GM12878 (cell line): ENCODE measurements at regions of chr20 and their contacts with region 1.

Region 1: DNA sequence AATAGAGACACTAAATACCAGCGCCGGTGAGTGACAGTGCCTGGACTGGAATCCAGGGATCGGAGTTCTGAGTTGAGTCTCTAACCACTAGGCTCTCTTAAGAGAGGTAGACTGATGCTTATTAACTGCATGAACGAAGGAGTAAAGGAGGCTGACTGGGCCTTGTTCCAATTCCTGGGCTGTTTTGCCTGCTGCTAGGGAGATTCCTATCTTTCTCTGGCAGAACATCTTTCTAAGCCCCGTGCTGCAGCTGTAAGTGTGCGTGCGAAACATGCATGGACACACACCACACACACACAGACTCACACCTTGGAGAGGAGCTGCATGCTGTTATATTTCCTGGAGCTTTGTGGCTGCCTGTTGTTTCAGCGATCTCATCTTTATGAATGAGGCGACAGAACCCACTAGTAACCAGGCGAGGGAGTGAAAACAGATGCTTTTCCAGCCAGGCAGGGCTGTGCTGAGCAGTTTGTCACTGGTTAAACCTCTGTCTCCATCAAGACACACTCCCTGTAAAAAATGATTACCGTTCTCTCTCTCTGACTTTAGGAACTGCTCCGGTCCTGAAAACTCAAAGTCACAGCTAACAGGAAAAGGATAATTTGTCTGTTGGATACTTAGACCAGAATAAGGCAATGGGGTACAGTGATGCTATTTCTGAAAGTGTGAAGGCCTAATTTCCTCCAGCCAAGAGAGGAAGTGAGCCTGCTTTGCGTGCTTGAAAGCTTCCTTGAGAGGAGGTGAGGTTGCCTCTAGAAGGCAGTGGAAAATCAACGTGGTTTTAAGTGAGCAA is 157.4 kb upstream of the ZNF217 start:
- DNase-seq: peak; percentile 69
- ATAC-seq: peak; percentile 83
- H3K4me3 ChIP-seq: peak overlapping the region; percentile 2; the same call in 1 of the 2 replicates
- H3K27ac ChIP-seq: peak overlapping the region; percentile 99
- H3K4me1 ChIP-seq: peaks cover 64% of the 10 kb centered on the region
- H3K27me3 ChIP-seq: no peaks in the 10 kb centered on the region
- CTCF ChIP-seq: no peak
- EP300 ChIP-seq: peak; percentile 56 to 89; a peak in 3 of 4 replicates
- POLR2A ChIP-seq: peak; percentile 45; the same call in 1 of the 2 replicates
- RAD21 ChIP-seq: peak; percentile 47

Region 2: GRCh38 chr20:53578492-53579222 is 172.4 kb before region 1 on chr20:
- CTCF ChIA-PET with region 1: interaction called, 3 read pairs
- POLR2A ChIA-PET with region 1: no interaction called
- RAD21 ChIA-PET with region 1: interaction called, 4 read pairs
- SMC1A ChIA-PET with region 1: interaction called, 7 read pairs
- in situ Hi-C with region 1: no loop called
- intact Hi-C with region 1: loop called (anchors 5 kb)
- DNase-seq: peak; percentile 76
- ATAC-seq: peak; percentile 61
- H3K4me3 ChIP-seq: peak overlapping the region; percentile 79
- H3K27ac ChIP-seq: peak overlapping the region; percentile 69
- H3K4me1 ChIP-seq: peaks cover 9% of the 10 kb centered on the region
- H3K27me3 ChIP-seq: no peaks in the 10 kb centered on the region
- CTCF ChIP-seq: peak; percentile 65 to 82 (median 79)
- EP300 ChIP-seq: no peak
- POLR2A ChIP-seq: no peak
- RAD21 ChIP-seq: peak; percentile 91

Region 3: DNA sequence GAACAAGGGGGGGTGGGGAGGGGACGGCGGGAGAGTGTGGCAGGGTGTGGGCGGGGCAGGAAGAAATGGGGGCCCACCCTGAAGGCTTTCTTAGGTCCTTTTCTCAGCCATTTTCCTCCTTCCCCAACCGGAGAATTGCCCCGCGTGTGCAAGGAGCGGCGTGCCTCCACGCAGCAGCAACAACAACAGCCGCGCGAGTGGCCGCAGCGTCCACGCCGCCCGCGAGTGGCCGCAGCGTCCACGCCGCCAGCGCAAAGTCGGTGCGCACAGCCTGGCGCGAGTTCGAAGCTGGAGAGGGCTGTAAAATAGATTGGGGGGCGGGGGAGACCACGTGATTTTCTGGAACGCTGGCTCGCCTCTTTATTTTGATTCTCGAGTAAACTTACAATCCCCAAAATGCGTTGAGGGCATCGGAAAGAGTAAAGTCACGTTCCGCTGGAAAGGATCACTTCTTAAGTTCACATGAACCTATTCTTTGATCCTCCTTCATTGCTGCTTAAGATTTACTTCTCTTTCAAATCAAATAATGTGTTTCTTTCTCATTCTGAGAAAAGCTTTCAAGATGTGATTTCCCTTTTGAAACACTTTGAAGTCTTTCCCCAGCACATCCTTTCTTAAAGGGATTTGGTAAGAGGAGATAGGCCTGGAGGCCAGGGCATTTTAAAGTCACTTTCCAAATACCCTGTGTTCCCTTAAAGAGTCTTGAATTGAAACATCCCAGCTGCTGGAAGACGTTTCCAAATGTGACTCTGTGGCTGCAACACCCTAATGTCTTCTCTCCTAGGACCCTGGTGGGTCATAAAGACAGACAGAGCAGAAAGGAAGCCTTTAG is 90.7 kb before region 1 on chr20:
- CTCF ChIA-PET with region 1: interaction called, 5 read pairs
- POLR2A ChIA-PET with region 1: interaction called, 3 read pairs
- RAD21 ChIA-PET with region 1: interaction called, 15 read pairs
- SMC1A ChIA-PET with region 1: interaction called, 59 read pairs
- in situ Hi-C with region 1: no loop called
- intact Hi-C with region 1: loop called (anchors 5 kb)
- DNase-seq: no peak
- ATAC-seq: peak; percentile 27
- H3K4me3 ChIP-seq: peak overlapping the region; percentile 63
- H3K27ac ChIP-seq: peak overlapping the region; percentile 84
- H3K4me1 ChIP-seq: peaks cover 61% of the 10 kb centered on the region
- H3K27me3 ChIP-seq: no peaks in the 10 kb centered on the region
- CTCF ChIP-seq: no peak
- EP300 ChIP-seq: no peak; a peak in 1 of 4 replicates
- POLR2A ChIP-seq: peak; percentile 41; the same call in 1 of the 2 replicates
- RAD21 ChIP-seq: 0 out of 2 replicates have a peak, but pooled peaks have one; percentile 4

Region 4: GRCh38 chr20:53718142-53719021 is 32.6 kb before region 1 on chr20:
- CTCF ChIA-PET with region 1: interaction called, 3 read pairs
- POLR2A ChIA-PET with region 1: interaction called, 5 read pairs
- RAD21 ChIA-PET with region 1: interaction called, 4 read pairs
- SMC1A ChIA-PET with region 1: interaction called, 15 read pairs
- in situ Hi-C with region 1: no loop called
- intact Hi-C with region 1: no loop called
- DNase-seq: no peak
- ATAC-seq: no peak
- H3K4me3 ChIP-seq: no peak overlapping the region
- H3K27ac ChIP-seq: no peak overlapping the region
- H3K4me1 ChIP-seq: peaks cover 22% of the 10 kb centered on the region
- H3K27me3 ChIP-seq: no peaks in the 10 kb centered on the region
- CTCF ChIP-seq: no peak
- EP300 ChIP-seq: no peak
- POLR2A ChIP-seq: no peak
- RAD21 ChIP-seq: no peak

Region 5: DNA sequence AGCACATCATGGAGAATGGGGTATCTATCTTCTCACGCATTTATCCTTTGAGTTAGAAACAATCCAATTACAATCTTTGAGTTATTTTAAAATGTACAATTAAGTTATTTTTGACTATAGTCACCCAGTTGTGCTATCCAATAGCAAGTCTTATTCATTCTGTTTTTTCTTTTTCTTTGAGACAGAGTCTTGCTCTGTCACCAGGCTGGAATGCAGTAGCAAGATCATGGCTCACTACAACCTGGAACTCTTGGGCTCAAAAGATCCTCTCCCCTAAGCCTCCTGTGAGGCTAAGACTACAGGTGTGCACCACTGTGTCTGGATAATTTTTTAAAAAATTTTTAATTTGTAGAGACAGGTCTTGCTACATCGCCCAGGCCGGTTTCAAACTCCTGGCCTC is 44.1 kb after region 1 on chr20:
- CTCF ChIA-PET with region 1: no interaction called
- POLR2A ChIA-PET with region 1: no interaction called
- RAD21 ChIA-PET with region 1: no interaction called
- SMC1A ChIA-PET with region 1: no interaction called
- in situ Hi-C with region 1: no loop called
- intact Hi-C with region 1: no loop called
- DNase-seq: no peak
- ATAC-seq: no peak
- H3K4me3 ChIP-seq: no peak overlapping the region
- H3K27ac ChIP-seq: no peak overlapping the region
- H3K4me1 ChIP-seq: no peaks in the 10 kb centered on the region
- H3K27me3 ChIP-seq: no peaks in the 10 kb centered on the region
- CTCF ChIP-seq: no peak
- EP300 ChIP-seq: no peak
- POLR2A ChIP-seq: no peak
- RAD21 ChIP-seq: no peak

Region 6: GRCh38 chr20:53834062-53834442 is 83.0 kb after region 1 on chr20:
- CTCF ChIA-PET with region 1: interaction called, 4 read pairs
- POLR2A ChIA-PET with region 1: interaction called, 6 read pairs
- RAD21 ChIA-PET with region 1: interaction called, 26 read pairs
- SMC1A ChIA-PET with region 1: interaction called, 23 read pairs
- in situ Hi-C with region 1: no loop called
- intact Hi-C with region 1: loop called (anchors 2 kb)
- DNase-seq: no peak
- ATAC-seq: peak; percentile 64
- H3K4me3 ChIP-seq: no peak overlapping the region
- H3K27ac ChIP-seq: peak overlapping the region; percentile 69
- H3K4me1 ChIP-seq: peaks cover 42% of the 10 kb centered on the region
- H3K27me3 ChIP-seq: no peaks in the 10 kb centered on the region
- CTCF ChIP-seq: no peak
- EP300 ChIP-seq: no peak; a peak in 1 of 4 replicates
- POLR2A ChIP-seq: 0 out of 2 replicates have a peak, but pooled peaks have one; percentile 21
- RAD21 ChIP-seq: peak; percentile 14; the same call in 1 of the 2 replicates

Region 7: GRCh38 chr20:53934421-53935343 is 183.7 kb after region 1 on chr20:
- CTCF ChIA-PET with region 1: interaction called, 12 read pairs
- POLR2A ChIA-PET with region 1: no interaction called
- RAD21 ChIA-PET with region 1: interaction called, 12 read pairs
- SMC1A ChIA-PET with region 1: interaction called, 11 read pairs
- in situ Hi-C with region 1: no loop called
- intact Hi-C with region 1: no loop called
- DNase-seq: no peak
- ATAC-seq: peak; percentile 77
- H3K4me3 ChIP-seq: peak overlapping the region; percentile 33; the same call in 1 of the 2 replicates
- H3K27ac ChIP-seq: peak overlapping the region; percentile 91
- H3K4me1 ChIP-seq: peaks cover 52% of the 10 kb centered on the region
- H3K27me3 ChIP-seq: no peaks in the 10 kb centered on the region
- CTCF ChIP-seq: 0 out of 6 replicates have a peak, but pooled peaks of 1 of the 3 experiments have one; percentile 4
- EP300 ChIP-seq: no peak
- POLR2A ChIP-seq: 0 out of 2 replicates have a peak, but pooled peaks have one; percentile 4
- RAD21 ChIP-seq: 0 out of 2 replicates have a peak, but pooled peaks have one; percentile 12